Dorsolateral prefrontal cortex (tissue), 120 donors: ENCODE measurements at regions of chr1 and their contacts with region 1.

Region 1: GRCh38 chr1:32179443-32180185 is at the start of gene TXLNA:
- DNase-seq: peak; percentile 89 to 97 (median 92)
- H3K4me3 ChIP-seq: peak within 1 kb of the TSS; percentile 58 to 100 (median 79)
- H3K27ac ChIP-seq: peak within 1 kb of the TSS; percentile 66 to 100 (median 97)
- H3K27me3 ChIP-seq: no peaks in the 10 kb centered on the region
- CTCF ChIP-seq: peak in 42 of 56 donors; percentile 10 to 62 (median 33)
- total RNA-seq, gene TXLNA: 22.6 to 39.3 (median 29.4) TPM

Region 2: GRCh38 chr1:31987135-31987619 is 192.4 kb before region 1 on chr1:
- intact Hi-C with region 1: no loop called
- DNase-seq: peak in 1 of 10 donors; percentile 21
- H3K4me3 ChIP-seq: no peak overlapping the region
- H3K27ac ChIP-seq: peak overlapping the region in 15 of 59 donors; percentile 4 to 66 (median 38)
- H3K27me3 ChIP-seq: no peaks in the 10 kb centered on the region
- CTCF ChIP-seq: no peak

Region 3: DNA sequence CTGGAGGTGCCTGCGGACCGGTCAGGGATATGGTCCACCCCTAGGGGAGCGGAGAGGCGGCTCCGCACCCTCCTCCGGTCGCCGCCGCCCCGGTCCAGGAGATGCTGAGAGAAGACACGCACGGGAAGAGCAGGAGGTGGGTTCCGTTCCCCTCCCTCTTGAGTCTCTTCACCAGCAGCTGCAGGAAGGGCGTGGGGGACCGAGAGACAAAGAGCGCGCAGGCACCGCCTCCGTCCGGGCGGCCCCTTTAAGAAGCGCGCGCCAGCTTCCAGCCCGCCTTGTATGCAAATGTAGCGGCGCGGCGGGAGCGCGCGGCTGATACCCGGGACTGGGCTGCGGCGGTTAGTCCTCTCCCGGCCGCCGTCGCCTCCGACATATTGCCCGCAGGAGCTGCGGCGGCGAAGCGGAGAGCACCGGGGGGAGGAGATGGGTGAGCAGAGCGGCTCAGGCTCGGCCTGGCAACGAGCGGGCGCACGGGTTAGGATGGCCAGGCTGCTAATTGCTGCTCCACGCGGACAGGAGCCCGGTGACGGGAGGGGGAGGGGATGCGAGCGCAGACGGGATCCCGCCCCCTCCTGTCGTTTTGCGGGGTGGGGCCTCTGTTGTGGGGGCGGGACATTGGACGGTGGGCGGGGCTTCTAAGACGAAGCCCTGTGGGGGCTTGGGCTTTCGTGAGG is 106.9 kb before region 1 on chr1 and contains the start of gene TMEM39B:
- intact Hi-C with region 1: loop called in 1 of 2 experiments (anchors 2 kb)
- DNase-seq: peak; percentile 92 to 97 (median 96)
- H3K4me3 ChIP-seq: peak within 1 kb of the TSS; percentile 59 to 96 (median 81)
- H3K27ac ChIP-seq: peak within 1 kb of the TSS; percentile 61 to 99 (median 96)
- H3K27me3 ChIP-seq: no peaks in the 10 kb centered on the region
- CTCF ChIP-seq: peak in 28 of 56 donors; percentile 10 to 40 (median 22)
- total RNA-seq, gene TMEM39B: 14.3 to 30.7 (median 20.7) TPM

Region 4: GRCh38 chr1:32200226-32201010 is 20.8 kb after region 1 on chr1 and contains the start of gene CCDC28B:
- intact Hi-C with region 1: loop called in 1 of 2 experiments (anchors 2 kb)
- DNase-seq: peak in 9 of 10 donors; percentile 38 to 80 (median 71)
- H3K4me3 ChIP-seq: peak within 1 kb of the TSS; percentile 53 to 90 (median 75)
- H3K27ac ChIP-seq: peak within 1 kb of the TSS; percentile 1 to 93 (median 83)
- H3K27me3 ChIP-seq: no peaks in the 10 kb centered on the region
- CTCF ChIP-seq: peak in 3 of 56 donors; percentile 6 to 20 (median 9)
- total RNA-seq, gene CCDC28B: 5.1 to 21.3 (median 11.9) TPM

Region 5: GRCh38 chr1:32286763-32287162 is 107.1 kb after region 1 on chr1:
- intact Hi-C with region 1: no loop called
- DNase-seq: no peak
- H3K4me3 ChIP-seq: no peak overlapping the region
- H3K27ac ChIP-seq: no peak overlapping the region
- H3K27me3 ChIP-seq: peaks cover 0 to 2% (median 0%) of the 10 kb centered on the region in 45 donors
- CTCF ChIP-seq: no peak